Left ventricle myocardium superior (tissue), 1 donor: ENCODE measurements at regions of chr1 and their contacts with region 1.

Region 1: GRCh38 chr1:2044510-2045319 is 5.5 kb upstream of the PRKCZ start:
- DNase-seq: peak; percentile 87
- ATAC-seq: peak; percentile 80

Region 2: GRCh38 chr1:1959840-1960479 is 84.8 kb before region 1 on chr1:
- intact Hi-C with region 1: loop called (anchors 10 kb)
- DNase-seq: peak; percentile 93
- ATAC-seq: peak; percentile 97